Activated CD4-positive, alpha-beta T cell treated with anti-CD3 and anti-CD28 coated beads for 36 hours (primary cell): ENCODE measurements at regions of chr3 and their contacts with region 1.

Region 1: DNA sequence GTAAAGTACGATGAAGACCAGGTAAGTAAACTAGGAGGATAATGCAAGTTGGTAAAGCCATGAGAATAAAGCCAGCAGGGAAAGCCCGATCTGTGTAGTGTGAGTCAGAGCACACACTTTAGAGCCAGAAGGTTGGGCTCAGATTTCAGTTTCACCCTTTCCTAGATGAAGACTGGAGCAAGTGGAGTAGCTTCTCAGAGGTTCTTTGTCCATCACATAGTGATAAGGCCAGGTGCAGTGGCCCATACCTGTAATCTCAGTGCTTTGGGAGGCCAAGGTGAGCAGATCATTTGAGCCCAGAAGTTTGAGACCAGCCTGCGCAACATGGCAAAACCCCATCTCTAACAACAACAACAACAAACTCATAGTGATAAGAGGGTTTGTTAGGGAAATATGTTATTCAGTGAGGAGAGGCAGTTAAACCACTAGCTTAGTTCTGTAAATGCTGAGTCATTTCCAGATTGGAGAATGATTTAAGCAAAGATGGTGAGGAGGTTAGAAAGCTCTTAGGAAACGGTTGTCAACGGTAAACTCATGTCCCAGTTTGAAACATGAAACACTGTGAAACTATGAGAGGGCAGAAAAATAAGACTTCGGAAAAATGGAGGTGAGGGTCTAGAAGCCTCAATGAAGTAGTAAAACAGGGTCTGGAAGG is 39.0 kb downstream of the IL12A start:
- DNase-seq: peak; percentile 40
- ATAC-seq: peak; percentile 92
- H3K4me3 Mint-ChIP-seq: no peak overlapping the region
- H3K27ac Mint-ChIP-seq: peak overlapping the region; percentile 73
- H3K4me1 Mint-ChIP-seq: peaks cover 15% of the 10 kb centered on the region
- H3K27me3 Mint-ChIP-seq: no peaks in the 10 kb centered on the region

Region 2: DNA sequence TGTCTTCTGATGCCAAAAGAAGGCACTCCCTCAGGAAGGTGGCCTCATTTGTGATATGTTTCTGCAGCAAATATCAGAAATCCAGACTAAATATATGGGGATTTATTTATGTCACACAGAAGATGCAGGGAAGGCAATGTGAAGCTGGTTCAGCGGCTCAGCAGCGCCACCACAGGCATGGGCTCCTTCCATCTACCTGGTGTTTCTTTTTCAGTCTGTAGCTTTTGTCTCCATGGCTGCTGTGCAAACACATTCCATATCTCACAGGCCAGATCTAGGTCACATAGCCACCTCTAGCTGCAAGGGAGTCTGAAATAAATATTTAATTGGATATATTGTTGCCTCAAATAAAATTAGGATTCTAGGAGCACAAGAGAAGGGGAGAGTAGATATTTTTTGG is 541.1 kb before region 1 on chr3:
- CTCF ChIA-PET with region 1: no interaction called
- POLR2A ChIA-PET with region 1: no interaction called
- intact Hi-C with region 1: no loop called
- DNase-seq: no peak
- ATAC-seq: no peak
- H3K4me3 Mint-ChIP-seq: no peak overlapping the region
- H3K27ac Mint-ChIP-seq: no peak overlapping the region
- H3K4me1 Mint-ChIP-seq: no peaks in the 10 kb centered on the region
- H3K27me3 Mint-ChIP-seq: no peaks in the 10 kb centered on the region

Region 3: GRCh38 chr3:159919873-159920272 is 107.8 kb before region 1 on chr3:
- CTCF ChIA-PET with region 1: no interaction called
- POLR2A ChIA-PET with region 1: no interaction called
- intact Hi-C with region 1: no loop called
- DNase-seq: no peak
- ATAC-seq: no peak
- H3K4me3 Mint-ChIP-seq: no peak overlapping the region
- H3K27ac Mint-ChIP-seq: no peak overlapping the region
- H3K4me1 Mint-ChIP-seq: no peaks in the 10 kb centered on the region
- H3K27me3 Mint-ChIP-seq: peaks cover 8% of the 10 kb centered on the region

Region 4: GRCh38 chr3:160129459-160130061 is 101.9 kb after region 1 on chr3:
- CTCF ChIA-PET with region 1: no interaction called
- POLR2A ChIA-PET with region 1: no interaction called
- intact Hi-C with region 1: loop called in 1 of 2 experiments (anchors 5 kb)
- DNase-seq: no peak
- ATAC-seq: peak; percentile 19
- H3K4me3 Mint-ChIP-seq: no peak overlapping the region
- H3K27ac Mint-ChIP-seq: no peak overlapping the region
- H3K4me1 Mint-ChIP-seq: peaks cover 2% of the 10 kb centered on the region
- H3K27me3 Mint-ChIP-seq: peaks cover 2% of the 10 kb centered on the region

Region 5: DNA sequence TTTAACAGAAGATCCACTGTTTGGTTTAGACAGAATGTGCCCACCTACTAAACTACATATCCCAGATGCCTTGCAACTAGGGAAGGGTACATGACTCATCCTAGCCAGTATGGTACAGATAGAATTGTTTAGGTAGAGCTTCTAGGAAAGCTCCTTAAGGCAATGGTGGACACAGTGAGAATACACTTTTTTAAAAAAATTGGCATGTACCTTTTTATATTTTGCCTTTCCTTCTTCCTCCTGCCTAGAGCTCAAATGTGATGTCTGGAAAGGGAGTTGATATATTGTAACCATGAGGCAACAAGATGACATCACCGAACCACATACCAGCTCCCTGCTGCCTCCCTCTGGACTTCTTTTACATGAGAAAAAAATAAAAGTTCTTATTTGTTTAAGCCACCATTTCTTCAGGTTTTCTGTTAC is 183.1 kb after region 1 on chr3:
- CTCF ChIA-PET with region 1: interaction called, 4 read pairs
- POLR2A ChIA-PET with region 1: no interaction called
- intact Hi-C with region 1: loop called in 1 of 2 experiments (anchors 2 kb)
- DNase-seq: peak; percentile 11
- ATAC-seq: peak; percentile 72
- H3K4me3 Mint-ChIP-seq: no peak overlapping the region
- H3K27ac Mint-ChIP-seq: no peak overlapping the region
- H3K4me1 Mint-ChIP-seq: no peaks in the 10 kb centered on the region
- H3K27me3 Mint-ChIP-seq: peaks cover 14% of the 10 kb centered on the region

Region 6: DNA sequence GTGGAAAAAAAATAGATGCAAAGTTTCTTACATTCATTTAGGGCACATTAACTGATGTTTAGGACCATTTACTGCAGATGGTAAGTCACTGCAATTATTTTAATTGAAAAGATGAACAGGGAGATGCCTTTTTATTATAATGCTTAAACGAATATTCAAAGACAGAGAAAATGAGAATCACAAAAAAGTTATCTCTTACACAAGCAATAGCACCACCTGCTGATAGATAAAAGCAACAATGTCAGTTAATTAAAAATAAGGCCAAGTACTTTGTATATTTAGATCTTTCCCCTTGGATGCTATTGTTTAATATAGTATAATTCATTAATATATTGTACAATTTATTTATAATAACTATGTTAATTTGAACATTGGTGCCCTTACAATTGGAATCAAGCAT is 315.5 kb after region 1 on chr3:
- CTCF ChIA-PET with region 1: no interaction called
- POLR2A ChIA-PET with region 1: no interaction called
- intact Hi-C with region 1: loop called in 1 of 2 experiments (anchors 1 kb)
- DNase-seq: no peak
- ATAC-seq: no peak
- H3K4me3 Mint-ChIP-seq: no peak overlapping the region
- H3K27ac Mint-ChIP-seq: no peak overlapping the region
- H3K4me1 Mint-ChIP-seq: no peaks in the 10 kb centered on the region
- H3K27me3 Mint-ChIP-seq: no peaks in the 10 kb centered on the region